Ascending aorta (tissue), 2 donors: ENCODE measurements at regions of chr3 and their contacts with region 1.

Region 1: GRCh38 chr3:190883973-190884832 is 21.7 kb upstream of the GMNC start:
- DNase-seq: no peak
- H3K4me3 ChIP-seq: no peak overlapping the region
- H3K27ac ChIP-seq: no peak overlapping the region
- H3K4me1 ChIP-seq: no peaks in the 10 kb centered on the region
- H3K27me3 ChIP-seq: no peaks in the 10 kb centered on the region
- CTCF ChIP-seq: peak in 2 of 3 experiments; percentile 73 to 83

Region 2: GRCh38 chr3:190926619-190927018 is 42.4 kb after region 1 on chr3:
- intact Hi-C with region 1: no loop called
- DNase-seq: no peak
- H3K4me3 ChIP-seq: no peak overlapping the region
- H3K27ac ChIP-seq: no peak overlapping the region
- H3K4me1 ChIP-seq: no peaks in the 10 kb centered on the region
- H3K27me3 ChIP-seq: no peaks in the 10 kb centered on the region
- CTCF ChIP-seq: no peak

Region 3: GRCh38 chr3:191051037-191051436 is 166.8 kb after region 1 on chr3:
- intact Hi-C with region 1: loop called (anchors 10 kb)
- DNase-seq: no peak
- H3K4me3 ChIP-seq: no peak overlapping the region
- H3K27ac ChIP-seq: no peak overlapping the region
- H3K4me1 ChIP-seq: no peaks in the 10 kb centered on the region
- H3K27me3 ChIP-seq: no peaks in the 10 kb centered on the region
- CTCF ChIP-seq: peak in 1 of 3 experiments; percentile 44

Region 4: GRCh38 chr3:191085091-191085490 is 200.9 kb after region 1 on chr3:
- intact Hi-C with region 1: no loop called
- DNase-seq: no peak
- H3K4me3 ChIP-seq: no peak overlapping the region
- H3K27ac ChIP-seq: no peak overlapping the region
- H3K4me1 ChIP-seq: no peaks in the 10 kb centered on the region
- H3K27me3 ChIP-seq: no peaks in the 10 kb centered on the region
- CTCF ChIP-seq: no peak